CD8-positive, alpha-beta T cell (primary cell): ENCODE measurements at regions of chr15 and their contacts with region 1.

Region 1: GRCh38 chr15:73991726-73992593 is at the start of gene STOML1:
- DNase-seq: peak; percentile 88 to 97 (median 96)
- ATAC-seq: peak; percentile 79
- H3K4me3 ChIP-seq: peak within 1 kb of the TSS; percentile 62 to 88
- H3K4me3 Mint-ChIP-seq: peak within 1 kb of the TSS; percentile 100
- H3K27ac ChIP-seq: peak within 1 kb of the TSS; percentile 53
- H3K27ac Mint-ChIP-seq: peak within 1 kb of the TSS; percentile 73
- H3K4me1 ChIP-seq: peaks cover 42% of the 10 kb centered on the region
- H3K4me1 Mint-ChIP-seq: peaks cover 48% of the 10 kb centered on the region
- H3K27me3 ChIP-seq: no peaks in the 10 kb centered on the region
- H3K27me3 Mint-ChIP-seq: no peaks in the 10 kb centered on the region
- CTCF ChIP-seq: peak; percentile 95
- total RNA-seq, gene STOML1: 2.5 to 4.8 TPM

Region 2: GRCh38 chr15:72117486-72118399 is 1874.2 kb before region 1 on chr15 and contains the start of gene MYO9A:
- CTCF ChIA-PET with region 1: no interaction called
- POLR2A ChIA-PET with region 1: no interaction called
- intact Hi-C with region 1: loop called in 1 of 2 experiments (anchors 10 kb)
- DNase-seq: peak; percentile 97 to 100 (median 99)
- ATAC-seq: peak; percentile 80
- H3K4me3 ChIP-seq: peak within 1 kb of the TSS; percentile 78 to 93
- H3K4me3 Mint-ChIP-seq: peak within 1 kb of the TSS; percentile 99
- H3K27ac ChIP-seq: peak within 1 kb of the TSS; percentile 95 to 97
- H3K27ac Mint-ChIP-seq: peak within 1 kb of the TSS; percentile 99
- H3K4me1 ChIP-seq: peaks cover 18% of the 10 kb centered on the region
- H3K4me1 Mint-ChIP-seq: peaks cover 45% of the 10 kb centered on the region
- H3K27me3 ChIP-seq: no peaks in the 10 kb centered on the region
- H3K27me3 Mint-ChIP-seq: no peaks in the 10 kb centered on the region
- CTCF ChIP-seq: no peak
- total RNA-seq, gene MYO9A: 15.1 to 20.0 TPM

Region 3: GRCh38 chr15:73950831-73951561 is 41.0 kb before region 1 on chr15:
- CTCF ChIA-PET with region 1: interaction called, 15 read pairs
- POLR2A ChIA-PET with region 1: interaction called, 3 read pairs
- intact Hi-C with region 1: no loop called
- DNase-seq: peak; percentile 53 to 87 (median 78)
- ATAC-seq: peak; percentile 98
- H3K4me3 ChIP-seq: no peak overlapping the region
- H3K4me3 Mint-ChIP-seq: no peak overlapping the region
- H3K27ac ChIP-seq: no peak overlapping the region
- H3K27ac Mint-ChIP-seq: peak overlapping the region; percentile 89
- H3K4me1 ChIP-seq: peaks cover 3% of the 10 kb centered on the region
- H3K4me1 Mint-ChIP-seq: peaks cover 4% of the 10 kb centered on the region
- H3K27me3 ChIP-seq: no peaks in the 10 kb centered on the region
- H3K27me3 Mint-ChIP-seq: no peaks in the 10 kb centered on the region
- CTCF ChIP-seq: peak; percentile 89

Region 4: GRCh38 chr15:74007820-74008371 is 15.9 kb after region 1 on chr15:
- CTCF ChIA-PET with region 1: interaction called, 10 read pairs
- POLR2A ChIA-PET with region 1: interaction called, 7 read pairs
- intact Hi-C with region 1: no loop called
- DNase-seq: peak in 1 of 9 experiments; percentile 42
- ATAC-seq: peak; percentile 62
- H3K4me3 ChIP-seq: no peak overlapping the region
- H3K4me3 Mint-ChIP-seq: peak overlapping the region; percentile 56
- H3K27ac ChIP-seq: no peak overlapping the region
- H3K27ac Mint-ChIP-seq: peak overlapping the region; percentile 86
- H3K4me1 ChIP-seq: peaks cover 33% of the 10 kb centered on the region
- H3K4me1 Mint-ChIP-seq: peaks cover 65% of the 10 kb centered on the region
- H3K27me3 ChIP-seq: no peaks in the 10 kb centered on the region
- H3K27me3 Mint-ChIP-seq: no peaks in the 10 kb centered on the region
- CTCF ChIP-seq: no peak

Region 5: GRCh38 chr15:74460871-74461846 is 469.2 kb after region 1 on chr15 and contains the start of gene UBL7:
- CTCF ChIA-PET with region 1: no interaction called
- POLR2A ChIA-PET with region 1: no interaction called
- intact Hi-C with region 1: loop called in 1 of 2 experiments (anchors 2 kb)
- DNase-seq: peak; percentile 93 to 99 (median 96)
- ATAC-seq: peak; percentile 98
- H3K4me3 ChIP-seq: peak within 1 kb of the TSS; percentile 74 to 85
- H3K4me3 Mint-ChIP-seq: peak within 1 kb of the TSS; percentile 93
- H3K27ac ChIP-seq: peak within 1 kb of the TSS; percentile 53 to 83
- H3K27ac Mint-ChIP-seq: peak within 1 kb of the TSS; percentile 94
- H3K4me1 ChIP-seq: peaks cover 21% of the 10 kb centered on the region
- H3K4me1 Mint-ChIP-seq: peaks cover 50% of the 10 kb centered on the region
- H3K27me3 ChIP-seq: no peaks in the 10 kb centered on the region
- H3K27me3 Mint-ChIP-seq: no peaks in the 10 kb centered on the region
- CTCF ChIP-seq: no peak
- total RNA-seq, gene UBL7: 21.7 to 23.1 TPM

Region 6: GRCh38 chr15:74907163-74907788 is 915.3 kb after region 1 on chr15:
- CTCF ChIA-PET with region 1: no interaction called
- POLR2A ChIA-PET with region 1: no interaction called
- intact Hi-C with region 1: no loop called
- DNase-seq: no peak
- ATAC-seq: no peak
- H3K4me3 ChIP-seq: peak overlapping the region; percentile 85 to 89
- H3K4me3 Mint-ChIP-seq: peak overlapping the region; percentile 94
- H3K27ac ChIP-seq: peak overlapping the region; percentile 78 to 82
- H3K27ac Mint-ChIP-seq: peak overlapping the region; percentile 95
- H3K4me1 ChIP-seq: peaks cover 22% of the 10 kb centered on the region
- H3K4me1 Mint-ChIP-seq: peaks cover 34% of the 10 kb centered on the region
- H3K27me3 ChIP-seq: no peaks in the 10 kb centered on the region
- H3K27me3 Mint-ChIP-seq: no peaks in the 10 kb centered on the region
- CTCF ChIP-seq: no peak